Spleen (tissue), 13 donors: ENCODE measurements at regions of chr5 and their contacts with region 1.

Region 1: GRCh38 chr5:55159763-55160492 is at the start of gene GPX8:
- DNase-seq: no peak
- H3K4me3 ChIP-seq: peak within 1 kb of the TSS; percentile 9 to 60 (median 28)
- H3K27ac ChIP-seq: peak within 1 kb of the TSS in 7 of 8 donors; percentile 5 to 60 (median 30)
- H3K4me1 ChIP-seq: peaks cover 0 to 9% (median 2%) of the 10 kb centered on the region in 6 donors
- H3K27me3 ChIP-seq: peaks cover 0 to 44% (median 3%) of the 10 kb centered on the region in 7 donors
- CTCF ChIP-seq: peak in 9 of 11 experiments; percentile 6 to 57 (median 26)
- POLR2A ChIP-seq: no peak
- total RNA-seq, gene GPX8: 3.9 to 10.0 (median 6.9) TPM

Region 2: DNA sequence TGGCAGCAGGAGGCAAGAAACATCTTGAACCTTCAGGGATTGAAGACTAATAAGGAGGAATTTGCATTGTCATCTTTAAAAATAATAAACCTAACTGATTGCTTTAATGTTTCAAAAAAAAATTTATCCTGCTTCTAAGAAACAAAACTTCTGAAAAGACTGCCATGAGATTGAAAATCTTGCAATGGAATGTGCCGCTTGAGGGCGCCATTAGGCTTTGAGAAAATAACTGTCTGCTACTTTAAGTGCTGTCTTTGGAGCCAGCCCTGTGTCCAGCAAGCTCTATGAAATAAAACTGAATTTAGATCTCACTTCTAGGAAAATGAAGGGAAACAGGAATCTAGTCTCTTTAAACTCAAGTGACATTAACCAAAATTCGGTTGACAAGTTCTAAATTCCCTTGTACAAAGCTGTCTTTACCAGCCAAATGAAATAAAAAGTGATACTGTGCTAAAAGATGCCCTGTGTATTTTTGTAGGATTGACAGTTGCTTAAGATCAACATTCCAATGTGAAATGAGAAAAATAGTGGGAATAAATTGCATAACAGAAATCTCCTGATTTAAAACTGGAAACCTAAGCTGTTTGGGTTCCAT is 253.9 kb before region 1 on chr5:
- intact Hi-C with region 1: loop called (anchors 10 kb)
- DNase-seq: no peak
- H3K4me3 ChIP-seq: no peak overlapping the region
- H3K27ac ChIP-seq: no peak overlapping the region
- H3K4me1 ChIP-seq: peaks cover 0 to 21% (median 4%) of the 10 kb centered on the region in 6 donors
- H3K27me3 ChIP-seq: peaks cover 0 to 22% (median 0%) of the 10 kb centered on the region in 7 donors
- CTCF ChIP-seq: peak in 10 of 11 experiments; percentile 6 to 66 (median 44)
- POLR2A ChIP-seq: no peak